Mucosa of descending colon (tissue), 3 donors: ENCODE measurements at regions of chr14 and their contacts with region 1.

Region 1: GRCh38 chr14:30521899-30522736 is 36.8 kb upstream of the G2E3 start:
- DNase-seq: no peak
- ATAC-seq: peak; percentile 23
- H3K4me3 ChIP-seq: no peak overlapping the region
- H3K4me1 ChIP-seq: no peaks in the 10 kb centered on the region
- CTCF ChIP-seq: peak; percentile 65

Region 2: GRCh38 chr14:30375296-30375892 is 146.7 kb before region 1 on chr14:
- intact Hi-C with region 1: loop called in 1 of 2 experiments (anchors 10 kb)
- DNase-seq: peak in 2 of 3 donors; percentile 74 to 78
- ATAC-seq: peak; percentile 88
- H3K4me3 ChIP-seq: no peak overlapping the region
- H3K4me1 ChIP-seq: no peaks in the 10 kb centered on the region
- CTCF ChIP-seq: peak; percentile 51